Lower leg skin (tissue), 4 donors: ENCODE measurements at regions of chr16 and their contacts with region 1.

Region 1: DNA sequence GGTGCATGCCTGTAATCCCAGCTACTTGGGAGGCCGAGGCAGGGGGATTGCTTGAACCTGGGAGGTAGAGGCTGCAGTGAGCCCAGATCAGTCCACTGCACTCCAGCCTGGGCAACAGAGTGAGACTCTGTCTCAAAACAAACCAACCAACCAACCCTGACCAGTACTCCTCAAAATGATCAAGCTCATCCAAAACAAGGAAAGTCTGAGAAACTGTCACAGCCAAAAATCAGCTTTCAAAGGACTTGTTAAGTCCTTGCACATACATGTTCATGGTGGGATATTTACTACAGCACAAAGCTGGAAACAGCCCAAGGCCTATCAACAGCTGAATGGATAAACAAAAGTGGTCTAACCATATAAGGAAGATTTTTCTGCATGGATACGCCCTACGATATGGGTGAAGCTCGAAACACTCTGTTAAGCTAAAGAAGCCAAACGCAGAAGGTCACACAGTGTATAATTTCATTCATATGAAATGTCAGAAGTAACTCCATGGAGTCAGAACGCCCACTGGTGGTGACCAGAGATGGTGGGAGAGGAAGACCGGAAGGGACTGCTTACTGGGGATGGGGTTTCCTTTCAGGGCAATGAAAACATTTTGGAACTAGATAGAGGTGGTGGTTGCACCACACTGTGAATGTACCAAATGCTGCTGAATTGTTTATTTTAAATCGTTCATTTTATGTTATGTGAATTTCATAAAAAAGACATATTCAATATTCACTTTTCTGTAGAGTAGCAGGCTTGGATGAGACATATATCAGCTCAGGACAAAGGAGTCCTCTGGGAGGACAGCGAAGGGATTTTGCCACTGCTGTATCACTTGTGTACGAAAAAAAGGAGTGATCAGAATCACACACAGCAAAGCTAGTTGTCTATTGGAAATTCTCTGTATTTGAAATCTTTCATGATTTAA is 17.7 kb downstream of the CCL17 start:
- DNase-seq: peak in 1 of 2 donors; percentile 39
- H3K4me3 ChIP-seq: no peak overlapping the region
- CTCF ChIP-seq: no peak
- POLR2A ChIP-seq: no peak

Region 2: GRCh38 chr16:57084257-57084770 is 338.0 kb before region 1 on chr16:
- intact Hi-C with region 1: loop called (anchors 10 kb)
- DNase-seq: peak; percentile 67 to 94
- H3K4me3 ChIP-seq: no peak overlapping the region
- CTCF ChIP-seq: peak in 1 of 3 donors; percentile 87
- POLR2A ChIP-seq: no peak

Region 3: GRCh38 chr16:57372372-57373116 is 49.7 kb before region 1 on chr16 and contains the start of gene CX3CL1:
- intact Hi-C with region 1: loop called (anchors 1 kb)
- DNase-seq: peak; percentile 55 to 89
- H3K4me3 ChIP-seq: peak within 1 kb of the TSS; percentile 31
- CTCF ChIP-seq: peak in 1 of 3 donors; percentile 7
- POLR2A ChIP-seq: no peak
- total RNA-seq, gene CX3CL1: 5.8 to 31.9 (median 18.3) TPM

Region 4: GRCh38 chr16:57637424-57637823 is 215.1 kb after region 1 on chr16:
- intact Hi-C with region 1: no loop called
- DNase-seq: no peak
- H3K4me3 ChIP-seq: no peak overlapping the region
- CTCF ChIP-seq: no peak
- POLR2A ChIP-seq: no peak